Naive thymus-derived CD4-positive, alpha-beta T cell (primary cell): ENCODE measurements at regions of chr17 and their contacts with region 1.

Region 1: GRCh38 chr17:7252176-7253043 is at the start of gene ELP5:
- DNase-seq: peak in 5 of 9 donors; percentile 73 to 90 (median 83)
- ATAC-seq: peak; percentile 69
- H3K4me3 ChIP-seq: peak within 1 kb of the TSS; percentile 91
- H3K4me3 Mint-ChIP-seq: peak within 1 kb of the TSS; percentile 85 to 98 (median 96)
- H3K27ac ChIP-seq: peak within 1 kb of the TSS; percentile 94
- H3K27ac Mint-ChIP-seq: peak within 1 kb of the TSS; percentile 95 to 100 (median 99)
- H3K4me1 ChIP-seq: peaks cover 22 to 32% of the 10 kb centered on the region in 2 donors
- H3K4me1 Mint-ChIP-seq: peaks cover 29 to 51% (median 42%) of the 10 kb centered on the region in 7 donors
- H3K27me3 ChIP-seq: no peaks in the 10 kb centered on the region
- H3K27me3 Mint-ChIP-seq: peaks cover 0 to 4% (median 0%) of the 10 kb centered on the region in 5 donors
- total RNA-seq, gene ELP5: 26.9 to 49.1 (median 32.9) TPM

Region 2: GRCh38 chr17:7204828-7205461 is 47.5 kb before region 1 on chr17:
- CTCF ChIA-PET with region 1: no interaction called
- POLR2A ChIA-PET with region 1: no interaction called
- intact Hi-C with region 1: loop called (anchors 1 kb)
- DNase-seq: peak; percentile 90 to 99 (median 97)
- ATAC-seq: peak; percentile 90
- H3K4me3 ChIP-seq: peak overlapping the region; percentile 77
- H3K4me3 Mint-ChIP-seq: peak overlapping the region; percentile 67 to 94 (median 85)
- H3K27ac ChIP-seq: peak overlapping the region; percentile 91
- H3K27ac Mint-ChIP-seq: peak overlapping the region; percentile 88 to 99 (median 95)
- H3K4me1 ChIP-seq: peaks cover 15 to 17% of the 10 kb centered on the region in 2 donors
- H3K4me1 Mint-ChIP-seq: peaks cover 28 to 39% (median 32%) of the 10 kb centered on the region in 7 donors
- H3K27me3 ChIP-seq: no peaks in the 10 kb centered on the region
- H3K27me3 Mint-ChIP-seq: no peaks in the 10 kb centered on the region

Region 3: GRCh38 chr17:7219812-7220581 is 32.4 kb before region 1 on chr17 and contains the starts of genes ACADVL and DLG4:
- CTCF ChIA-PET with region 1: interaction called, 6 read pairs
- POLR2A ChIA-PET with region 1: interaction called, 9 read pairs
- intact Hi-C with region 1: loop called in 1 of 2 experiments (anchors 1 kb)
- DNase-seq: peak; percentile 45 to 87 (median 56)
- ATAC-seq: peak; percentile 76
- H3K4me3 ChIP-seq: peak within 1 kb of the TSS; percentile 73
- H3K4me3 Mint-ChIP-seq: peak within 1 kb of the TSS; percentile 88 to 95 (median 91)
- H3K27ac ChIP-seq: peak within 1 kb of the TSS; percentile 75
- H3K27ac Mint-ChIP-seq: peak within 1 kb of the TSS; percentile 81 to 98 (median 96)
- H3K4me1 ChIP-seq: peaks cover 25 to 47% of the 10 kb centered on the region in 2 donors
- H3K4me1 Mint-ChIP-seq: peaks cover 35 to 61% (median 55%) of the 10 kb centered on the region in 7 donors
- H3K27me3 ChIP-seq: no peaks in the 10 kb centered on the region
- H3K27me3 Mint-ChIP-seq: no peaks in the 10 kb centered on the region
- total RNA-seq, gene ACADVL: 287 to 390 (median 339) TPM
- total RNA-seq, gene DLG4: 10.9 to 25.4 (median 16.5) TPM

Region 4: GRCh38 chr17:7296189-7296902 is 43.9 kb after region 1 on chr17:
- CTCF ChIA-PET with region 1: interaction called, 3 read pairs
- POLR2A ChIA-PET with region 1: interaction called, 6 read pairs
- intact Hi-C with region 1: loop called in 1 of 2 experiments (anchors 1 kb)
- DNase-seq: peak in 5 of 9 donors; percentile 41 to 86 (median 62)
- ATAC-seq: peak; percentile 63
- H3K4me3 ChIP-seq: no peak overlapping the region
- H3K4me3 Mint-ChIP-seq: peak overlapping the region; percentile 18 to 89 (median 52)
- H3K27ac ChIP-seq: no peak overlapping the region
- H3K27ac Mint-ChIP-seq: peak overlapping the region in 2 of 9 donors; percentile 51 to 66
- H3K4me1 ChIP-seq: peaks cover 12 to 26% of the 10 kb centered on the region in 2 donors
- H3K4me1 Mint-ChIP-seq: peaks cover 6 to 30% (median 25%) of the 10 kb centered on the region in 7 donors
- H3K27me3 ChIP-seq: no peaks in the 10 kb centered on the region
- H3K27me3 Mint-ChIP-seq: peaks cover 4 to 54% (median 18%) of the 10 kb centered on the region in 5 donors

Region 5: DNA sequence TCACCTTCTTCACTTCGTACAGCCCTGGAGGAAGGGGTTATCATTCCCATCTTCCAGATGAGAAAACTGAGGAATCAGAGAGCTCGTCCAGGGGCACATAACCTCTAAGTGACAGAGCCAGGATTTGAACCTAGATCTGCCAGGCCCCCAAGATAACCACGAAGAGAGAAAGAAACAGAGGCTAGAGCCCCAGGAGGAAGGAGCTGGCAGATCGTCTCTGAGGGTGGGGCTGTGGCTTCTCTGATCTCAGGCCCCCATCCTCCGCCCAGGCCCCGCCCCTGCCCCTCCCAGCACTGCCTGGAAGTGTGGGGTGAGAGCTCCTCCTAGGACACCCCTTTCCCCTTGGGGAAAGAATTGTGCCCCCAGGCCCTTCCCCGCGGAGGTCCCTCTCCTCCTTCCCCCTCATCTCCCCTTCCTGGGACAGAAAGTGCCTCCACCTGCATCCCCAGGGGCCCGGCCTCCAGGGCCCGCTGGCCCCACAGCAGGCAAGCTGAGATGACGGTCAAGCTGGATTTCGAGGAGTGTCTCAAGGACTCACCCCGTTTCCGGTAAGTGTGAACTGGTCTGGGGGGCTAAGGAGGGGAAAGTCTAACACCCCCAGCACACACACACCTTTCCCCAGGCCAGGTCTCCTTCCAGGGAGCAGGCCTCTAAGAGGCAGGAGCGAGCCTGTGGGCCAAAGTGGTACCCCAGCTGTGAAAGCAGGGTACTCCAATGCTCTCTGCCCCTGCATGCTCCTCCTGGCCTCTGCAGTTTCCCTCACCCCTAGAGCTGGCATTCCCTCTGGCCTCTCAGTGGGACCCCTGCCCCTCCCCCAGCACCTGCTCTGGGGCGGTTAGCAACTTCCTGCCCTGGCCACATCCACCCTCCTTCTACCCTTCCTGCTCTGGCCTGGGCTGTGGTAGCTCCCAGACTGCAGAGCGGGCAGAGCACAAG is 84.1 kb after region 1 on chr17 and contains the start of gene ACAP1:
- CTCF ChIA-PET with region 1: no interaction called
- POLR2A ChIA-PET with region 1: no interaction called
- intact Hi-C with region 1: loop called in 1 of 2 experiments (anchors 1 kb)
- DNase-seq: peak; percentile 56 to 85 (median 82)
- ATAC-seq: peak; percentile 99
- H3K4me3 ChIP-seq: peak within 1 kb of the TSS; percentile 99
- H3K4me3 Mint-ChIP-seq: peak within 1 kb of the TSS; percentile 89 to 99 (median 94)
- H3K27ac ChIP-seq: peak within 1 kb of the TSS; percentile 81
- H3K27ac Mint-ChIP-seq: peak within 1 kb of the TSS; percentile 89 to 100 (median 95)
- H3K4me1 ChIP-seq: peaks cover 31 to 44% of the 10 kb centered on the region in 2 donors
- H3K4me1 Mint-ChIP-seq: peaks cover 49 to 76% (median 60%) of the 10 kb centered on the region in 7 donors
- H3K27me3 ChIP-seq: no peaks in the 10 kb centered on the region
- H3K27me3 Mint-ChIP-seq: no peaks in the 10 kb centered on the region
- total RNA-seq, gene ACAP1: 482 to 708 (median 599) TPM

Region 6: GRCh38 chr17:7454980-7455379 is 202.6 kb after region 1 on chr17:
- CTCF ChIA-PET with region 1: no interaction called
- POLR2A ChIA-PET with region 1: no interaction called
- intact Hi-C with region 1: loop called in 1 of 2 experiments (anchors 1 kb)
- DNase-seq: no peak
- ATAC-seq: peak; percentile 26
- H3K4me3 ChIP-seq: peak overlapping the region; percentile 92
- H3K4me3 Mint-ChIP-seq: peak overlapping the region; percentile 89 to 96 (median 95)
- H3K27ac ChIP-seq: peak overlapping the region; percentile 77
- H3K27ac Mint-ChIP-seq: peak overlapping the region; percentile 86 to 97 (median 94)
- H3K4me1 ChIP-seq: peaks cover 17 to 20% of the 10 kb centered on the region in 2 donors
- H3K4me1 Mint-ChIP-seq: peaks cover 13 to 44% (median 36%) of the 10 kb centered on the region in 7 donors
- H3K27me3 ChIP-seq: no peaks in the 10 kb centered on the region
- H3K27me3 Mint-ChIP-seq: no peaks in the 10 kb centered on the region

Region 7: DNA sequence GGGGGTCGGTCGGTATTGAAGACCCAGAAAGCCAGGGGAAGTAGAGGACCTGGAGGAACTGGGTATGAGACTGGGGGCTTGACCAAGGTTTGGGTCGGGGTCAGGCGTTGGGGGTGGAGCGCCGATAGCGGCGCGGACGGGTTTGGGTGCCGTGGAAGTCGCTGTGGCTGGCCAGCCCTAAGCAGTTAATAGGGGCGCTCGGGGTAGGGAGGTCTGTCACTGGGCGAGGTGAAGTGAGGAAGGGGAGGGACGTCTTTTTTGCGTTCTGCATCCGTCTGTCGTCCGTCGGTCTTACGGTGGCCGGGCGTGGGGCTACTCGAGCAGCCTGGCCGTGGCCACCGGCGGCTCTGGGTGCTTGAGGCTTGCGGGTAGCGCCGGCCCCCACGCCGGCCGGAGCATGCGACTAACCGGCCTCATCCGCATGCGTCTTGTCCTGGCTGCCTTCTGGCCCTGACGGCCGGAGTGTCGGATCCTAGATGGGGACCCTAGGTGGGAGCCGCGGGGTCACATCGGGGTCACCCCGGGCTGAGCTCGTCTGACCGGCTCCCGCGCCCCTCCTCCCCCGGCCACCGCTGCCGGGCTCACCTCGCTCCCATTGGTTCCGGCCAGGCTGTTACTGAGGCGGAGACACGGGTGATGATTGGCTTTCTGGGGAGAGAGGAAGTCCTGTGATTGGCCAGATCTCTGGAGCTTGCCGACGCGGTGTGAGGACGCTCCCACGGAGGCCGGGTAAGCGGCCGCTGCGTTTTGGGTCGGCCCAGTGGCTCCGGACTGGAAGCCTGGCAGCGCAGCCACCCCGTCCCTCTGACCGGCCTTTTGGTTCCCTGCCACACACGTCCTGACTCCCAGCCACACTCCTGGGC is 592.1 kb after region 1 on chr17:
- CTCF ChIA-PET with region 1: no interaction called
- POLR2A ChIA-PET with region 1: no interaction called
- intact Hi-C with region 1: loop called in 1 of 2 experiments (anchors 2 kb)
- DNase-seq: peak; percentile 74 to 87 (median 79)
- ATAC-seq: peak; percentile 42
- H3K4me3 ChIP-seq: peak overlapping the region; percentile 84
- H3K4me3 Mint-ChIP-seq: peak overlapping the region; percentile 85 to 99 (median 94)
- H3K27ac ChIP-seq: peak overlapping the region; percentile 100
- H3K27ac Mint-ChIP-seq: peak overlapping the region; percentile 90 to 100 (median 99)
- H3K4me1 ChIP-seq: peaks cover 11 to 26% of the 10 kb centered on the region in 2 donors
- H3K4me1 Mint-ChIP-seq: peaks cover 19 to 41% (median 29%) of the 10 kb centered on the region in 7 donors
- H3K27me3 ChIP-seq: no peaks in the 10 kb centered on the region
- H3K27me3 Mint-ChIP-seq: peaks cover 0 to 2% (median 0%) of the 10 kb centered on the region in 5 donors